ENCODE measurements at regions of chr17 and their contacts with region 1.

Region 1: DNA sequence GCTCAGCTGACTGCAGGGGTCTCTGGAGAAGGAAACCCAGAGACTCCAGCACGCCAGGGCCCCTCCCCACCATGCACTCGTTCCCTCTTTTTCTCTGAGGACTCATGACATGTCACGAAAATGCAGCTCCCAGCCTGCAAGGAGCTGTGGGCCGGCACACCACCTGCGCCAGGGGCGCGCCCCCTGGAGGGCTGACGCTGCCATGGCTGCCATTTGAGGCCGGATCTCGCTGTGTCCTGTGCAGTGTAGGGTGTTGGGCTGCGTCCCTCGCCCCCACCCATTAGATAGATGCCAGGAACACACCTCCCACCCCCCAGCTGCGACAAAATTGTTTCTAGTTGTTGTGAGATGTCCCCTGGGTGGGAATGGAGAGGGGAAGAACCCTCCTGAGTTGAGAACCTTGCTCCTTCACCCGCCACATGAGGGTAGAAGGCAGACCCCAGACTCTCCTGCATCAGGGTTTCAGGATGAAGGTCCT is 8.2 kb downstream of the SYNGR2 start:
- DNase-seq: peak; percentile 58 to 82 (median 74)
- ATAC-seq: peak; percentile 83
- H3K4me3 ChIP-seq: no peak overlapping the region
- H3K4me3 Mint-ChIP-seq: peak overlapping the region in 1 of 10 donors; percentile 23
- H3K27ac ChIP-seq: no peak overlapping the region
- H3K27ac Mint-ChIP-seq: peak overlapping the region in 1 of 9 donors; percentile 31
- H3K4me1 ChIP-seq: peaks cover 16 to 33% of the 10 kb centered on the region in 2 donors
- H3K4me1 Mint-ChIP-seq: peaks cover 28 to 62% (median 48%) of the 10 kb centered on the region in 7 donors
- H3K27me3 ChIP-seq: no peaks in the 10 kb centered on the region
- H3K27me3 Mint-ChIP-seq: no peaks in the 10 kb centered on the region

Region 2: DNA sequence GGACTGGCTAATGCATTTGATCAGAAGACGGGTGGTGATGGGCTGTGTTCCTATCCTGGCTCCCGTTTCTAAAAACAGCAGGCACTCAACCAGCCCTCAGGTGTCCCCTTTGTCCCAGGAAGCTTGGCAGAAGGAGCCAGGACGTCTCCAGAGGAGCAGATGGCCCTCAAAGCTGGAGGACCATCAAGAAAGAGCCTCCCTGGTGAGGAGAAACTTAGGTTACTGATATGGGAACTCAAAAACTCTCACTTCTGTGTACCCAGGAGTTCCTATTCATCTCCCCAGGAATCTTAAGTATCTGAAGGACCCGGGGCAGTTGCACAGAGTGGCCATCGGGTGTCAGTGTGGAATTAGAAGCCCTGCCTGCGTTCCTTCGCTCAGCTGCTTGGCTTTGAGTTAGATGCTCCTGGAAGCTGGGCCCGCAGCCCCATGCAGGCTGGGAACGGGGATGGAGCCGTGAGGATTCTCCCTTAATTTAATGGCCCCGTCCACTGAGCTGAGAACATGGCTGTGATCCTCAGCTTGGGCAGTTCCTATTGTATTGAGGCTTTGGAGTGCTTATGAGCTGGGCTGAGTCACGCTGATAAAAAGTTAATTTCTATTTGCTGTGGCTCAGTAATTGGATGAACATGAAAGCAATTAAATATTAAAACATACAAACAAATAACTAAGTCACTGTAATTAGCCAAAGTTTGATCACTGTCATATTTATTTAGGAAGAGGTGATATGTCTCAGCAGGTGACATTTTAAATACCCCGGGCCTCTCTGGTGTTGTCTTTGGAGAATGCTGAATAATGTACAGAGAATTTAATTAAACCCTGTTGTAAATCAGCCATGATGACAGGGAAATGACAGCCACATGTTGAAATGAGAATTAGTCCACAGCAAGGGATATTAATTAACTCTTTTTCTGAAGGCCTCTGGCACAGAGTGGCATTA is 633.8 kb before region 1 on chr17:
- CTCF ChIA-PET with region 1: no interaction called
- POLR2A ChIA-PET with region 1: no interaction called
- intact Hi-C with region 1: loop called in 1 of 2 experiments (anchors 10 kb)
- DNase-seq: peak; percentile 32 to 72 (median 62)
- ATAC-seq: peak; percentile 87
- H3K4me3 ChIP-seq: no peak overlapping the region
- H3K4me3 Mint-ChIP-seq: no peak overlapping the region
- H3K27ac ChIP-seq: no peak overlapping the region
- H3K27ac Mint-ChIP-seq: no peak overlapping the region
- H3K4me1 ChIP-seq: peaks cover 0 to 5% of the 10 kb centered on the region in 2 donors
- H3K4me1 Mint-ChIP-seq: peaks cover 0 to 7% (median 0%) of the 10 kb centered on the region in 7 donors
- H3K27me3 ChIP-seq: no peaks in the 10 kb centered on the region
- H3K27me3 Mint-ChIP-seq: peaks cover 0 to 37% (median 5%) of the 10 kb centered on the region in 5 donors

Region 3: DNA sequence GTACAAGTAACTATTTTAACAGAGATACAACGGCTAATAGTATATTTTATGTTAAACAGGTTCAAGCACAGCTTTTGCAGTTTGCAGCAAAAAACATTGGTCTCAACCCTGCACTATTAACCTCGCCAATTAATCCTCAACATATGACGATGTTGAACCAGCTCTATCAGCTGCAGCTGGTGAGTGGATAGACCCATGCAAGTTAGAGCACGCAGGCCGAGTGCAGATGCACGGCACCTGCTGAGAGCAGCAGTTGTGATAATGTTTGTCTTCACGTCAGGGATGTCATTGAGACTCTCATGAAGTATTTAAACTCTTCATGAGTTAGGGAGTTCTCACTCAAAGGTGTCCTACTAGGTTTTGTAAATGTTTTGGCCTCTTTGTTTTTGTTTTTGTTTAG is 93.6 kb before region 1 on chr17:
- CTCF ChIA-PET with region 1: interaction called, 6 read pairs
- POLR2A ChIA-PET with region 1: interaction called, 3 read pairs
- intact Hi-C with region 1: loop called (anchors 1 kb)
- DNase-seq: no peak
- ATAC-seq: no peak
- H3K4me3 ChIP-seq: no peak overlapping the region
- H3K4me3 Mint-ChIP-seq: no peak overlapping the region
- H3K27ac ChIP-seq: no peak overlapping the region
- H3K27ac Mint-ChIP-seq: no peak overlapping the region
- H3K4me1 ChIP-seq: no peaks in the 10 kb centered on the region
- H3K4me1 Mint-ChIP-seq: peaks cover 0 to 12% (median 0%) of the 10 kb centered on the region in 7 donors
- H3K27me3 ChIP-seq: no peaks in the 10 kb centered on the region
- H3K27me3 Mint-ChIP-seq: no peaks in the 10 kb centered on the region

Region 4: GRCh38 chr17:78128551-78129350 is 47.8 kb before region 1 on chr17 and contains the start of gene TMC6:
- CTCF ChIA-PET with region 1: interaction called, 6 read pairs
- POLR2A ChIA-PET with region 1: interaction called, 20 read pairs
- intact Hi-C with region 1: no loop called
- DNase-seq: peak in 8 of 9 donors; percentile 76 to 88 (median 82)
- ATAC-seq: peak; percentile 45
- H3K4me3 ChIP-seq: peak within 1 kb of the TSS; percentile 95
- H3K4me3 Mint-ChIP-seq: peak within 1 kb of the TSS; percentile 89 to 100 (median 99)
- H3K27ac ChIP-seq: peak within 1 kb of the TSS; percentile 77
- H3K27ac Mint-ChIP-seq: peak within 1 kb of the TSS; percentile 95 to 99 (median 97)
- H3K4me1 ChIP-seq: peaks cover 56 to 59% of the 10 kb centered on the region in 2 donors
- H3K4me1 Mint-ChIP-seq: peaks cover 19 to 53% (median 39%) of the 10 kb centered on the region in 7 donors
- H3K27me3 ChIP-seq: no peaks in the 10 kb centered on the region
- H3K27me3 Mint-ChIP-seq: peaks cover 0 to 3% (median 0%) of the 10 kb centered on the region in 5 donors
- total RNA-seq, gene TMC6: 574 to 808 (median 773) TPM

Region 5: DNA sequence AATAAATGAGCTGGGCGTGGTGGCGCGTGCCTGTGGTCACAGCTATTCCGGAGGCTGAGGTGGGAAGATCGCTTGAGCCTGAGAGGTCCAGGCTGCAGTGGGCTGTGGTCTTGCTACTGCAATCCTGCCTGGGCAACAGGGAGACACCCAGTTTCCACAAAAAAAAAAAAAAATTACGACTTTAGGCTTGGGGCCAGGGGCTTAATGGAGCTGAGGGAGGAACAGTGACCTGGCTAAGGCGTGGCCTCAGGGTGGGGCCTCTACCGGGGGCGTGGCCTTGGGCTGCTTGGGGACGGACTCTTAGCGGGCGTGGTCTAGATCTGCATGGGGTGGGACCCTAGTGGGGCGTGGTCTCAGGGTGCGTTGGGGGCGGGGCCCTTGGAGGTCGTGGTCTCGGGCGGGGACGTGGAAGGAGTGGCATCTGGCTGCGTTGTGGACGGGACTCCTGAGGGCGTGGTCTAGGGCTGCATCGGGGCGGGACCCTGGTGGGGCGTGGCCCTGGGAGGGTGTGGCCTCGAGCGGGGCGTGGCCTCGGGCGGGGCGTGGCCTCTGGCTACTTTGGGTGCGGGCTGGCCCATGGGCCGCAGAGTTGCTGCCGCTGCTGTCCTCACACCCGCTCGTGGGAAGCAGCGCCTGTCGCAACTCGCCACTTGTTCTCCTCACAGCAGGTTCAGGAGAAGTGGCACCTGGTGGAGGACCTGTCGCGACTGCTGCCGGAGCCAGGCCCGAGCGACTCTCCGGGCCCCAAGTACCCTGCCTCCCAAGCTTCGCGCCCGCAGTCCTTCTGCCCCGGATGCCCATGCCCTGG is 36.2 kb before region 1 on chr17:
- CTCF ChIA-PET with region 1: interaction called, 7 read pairs
- POLR2A ChIA-PET with region 1: interaction called, 13 read pairs
- intact Hi-C with region 1: loop called in 1 of 2 experiments (anchors 1 kb)
- DNase-seq: peak; percentile 88 to 98 (median 96)
- ATAC-seq: peak; percentile 95
- H3K4me3 ChIP-seq: no peak overlapping the region
- H3K4me3 Mint-ChIP-seq: peak overlapping the region; percentile 40 to 75 (median 64)
- H3K27ac ChIP-seq: peak overlapping the region; percentile 45
- H3K27ac Mint-ChIP-seq: peak overlapping the region; percentile 68 to 96 (median 87)
- H3K4me1 ChIP-seq: peaks cover 27 to 71% of the 10 kb centered on the region in 2 donors
- H3K4me1 Mint-ChIP-seq: peaks cover 57 to 80% (median 75%) of the 10 kb centered on the region in 7 donors
- H3K27me3 ChIP-seq: no peaks in the 10 kb centered on the region
- H3K27me3 Mint-ChIP-seq: no peaks in the 10 kb centered on the region

Measured in naive thymus-derived CD4-positive, alpha-beta T cell (primary cell).